ENCODE measurements at regions of chr16 and their contacts with region 1.

Region 1: GRCh38 chr16:23835390-23836077 is at the start of gene PRKCB:
- DNase-seq: peak; percentile 86
- H3K4me3 ChIP-seq: peak within 1 kb of the TSS; percentile 61 to 94 (median 91)
- H3K4me3 Mint-ChIP-seq: peak within 1 kb of the TSS; percentile 99
- H3K27ac ChIP-seq: peak within 1 kb of the TSS; percentile 38 to 76
- H3K27ac Mint-ChIP-seq: peak within 1 kb of the TSS; percentile 84 to 95 (median 91)
- H3K4me1 ChIP-seq: peaks cover 38 to 49% of the 10 kb centered on the region in 2 donors
- H3K4me1 Mint-ChIP-seq: peaks cover 50% of the 10 kb centered on the region
- H3K27me3 ChIP-seq: no peaks in the 10 kb centered on the region
- H3K27me3 Mint-ChIP-seq: peaks cover 5 to 6% (median 6%) of the 10 kb centered on the region in 3 donors
- CTCF ChIP-seq: no peak
- polyA plus RNA-seq, gene PRKCB: 57.4 to 87.4 (median 75.5) TPM

Region 2: DNA sequence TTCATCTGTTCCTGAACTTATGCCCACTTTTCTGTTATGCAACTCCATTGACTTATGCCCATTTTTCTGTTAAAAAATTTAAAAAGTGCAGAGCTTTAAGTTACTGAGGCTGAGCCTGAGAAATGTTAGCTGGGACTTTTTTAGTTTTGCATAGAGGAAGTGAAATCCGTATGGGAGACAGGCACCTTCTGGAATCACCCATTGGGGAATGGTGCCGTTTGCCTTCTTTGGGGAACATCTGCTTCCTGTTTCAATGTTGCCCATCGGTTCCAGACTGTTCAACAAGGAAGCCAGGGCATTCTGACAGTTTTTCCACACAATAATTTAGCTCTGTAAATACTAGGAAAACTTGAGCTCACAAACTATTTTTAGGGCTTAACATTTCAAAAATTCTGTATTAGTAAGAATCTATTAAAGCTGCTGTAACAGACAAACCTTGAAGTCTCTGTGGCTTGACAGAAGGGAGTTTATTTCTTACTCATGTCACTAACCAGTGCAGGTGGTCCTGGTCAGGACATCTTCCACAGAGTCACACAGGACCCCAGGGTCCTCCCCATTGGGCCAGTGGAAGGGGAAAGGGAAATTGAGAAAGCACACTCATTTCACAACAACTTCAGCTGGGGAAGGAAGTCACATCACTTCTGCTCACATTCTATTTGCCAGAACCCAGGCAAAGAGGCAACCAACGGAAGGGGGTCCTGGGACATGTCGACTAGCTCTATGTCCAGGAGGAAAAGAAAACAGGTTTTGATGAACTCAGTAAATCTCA is 17.4 kb after region 1 on chr16:
- intact Hi-C with region 1: loop called in 1 of 2 experiments (anchors 2 kb)
- DNase-seq: peak; percentile 26 to 86 (median 34)
- H3K4me3 ChIP-seq: peak overlapping the region in 2 of 3 experiments; percentile 10 to 46
- H3K4me3 Mint-ChIP-seq: peak overlapping the region; percentile 51 to 65
- H3K27ac ChIP-seq: peak overlapping the region; percentile 66 to 87
- H3K27ac Mint-ChIP-seq: peak overlapping the region; percentile 84 to 95 (median 93)
- H3K4me1 ChIP-seq: peaks cover 83 to 89% of the 10 kb centered on the region in 2 donors
- H3K4me1 Mint-ChIP-seq: peaks cover 96% of the 10 kb centered on the region
- H3K27me3 ChIP-seq: no peaks in the 10 kb centered on the region
- H3K27me3 Mint-ChIP-seq: no peaks in the 10 kb centered on the region
- CTCF ChIP-seq: no peak

Region 3: GRCh38 chr16:23874613-23875294 is 39.2 kb after region 1 on chr16:
- intact Hi-C with region 1: loop called in 1 of 2 experiments (anchors 5 kb)
- DNase-seq: peak; percentile 46 to 66 (median 66)
- H3K4me3 ChIP-seq: no peak overlapping the region
- H3K4me3 Mint-ChIP-seq: no peak overlapping the region
- H3K27ac ChIP-seq: peak overlapping the region; percentile 26 to 77
- H3K27ac Mint-ChIP-seq: peak overlapping the region; percentile 66 to 93 (median 78)
- H3K4me1 ChIP-seq: peaks cover 66 to 77% of the 10 kb centered on the region in 2 donors
- H3K4me1 Mint-ChIP-seq: peaks cover 82% of the 10 kb centered on the region
- H3K27me3 ChIP-seq: no peaks in the 10 kb centered on the region
- H3K27me3 Mint-ChIP-seq: no peaks in the 10 kb centered on the region
- CTCF ChIP-seq: no peak

Region 4: DNA sequence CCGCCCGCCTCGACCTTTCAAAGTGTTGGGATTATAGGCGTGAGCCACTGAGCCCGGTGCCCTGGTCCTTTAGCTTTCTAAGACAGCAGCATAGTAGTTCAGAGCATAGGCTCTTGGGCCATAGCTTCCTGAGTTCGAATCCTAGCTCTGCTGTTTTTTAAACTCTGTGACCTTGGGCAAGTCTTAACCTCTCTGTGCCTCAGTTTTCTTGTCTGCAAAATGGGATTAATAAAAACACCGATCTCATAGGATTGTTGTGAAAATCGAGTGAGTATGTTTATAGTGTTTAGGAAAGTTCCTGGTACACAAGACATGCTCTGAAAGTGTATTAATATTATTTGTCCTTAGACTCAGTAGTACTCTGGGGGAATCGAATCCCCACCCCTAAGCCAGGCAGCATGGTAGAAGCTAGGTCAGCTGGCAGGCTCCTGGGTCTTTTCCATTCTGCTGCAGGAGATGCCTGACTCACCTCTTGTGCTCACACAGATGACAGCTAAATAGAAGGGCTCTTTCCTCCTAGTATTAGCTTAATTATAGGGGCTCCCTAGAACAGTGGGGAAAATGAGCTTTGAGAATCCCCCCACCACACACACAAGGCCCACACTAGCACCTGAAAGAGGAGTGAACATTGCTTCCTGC is 44.3 kb after region 1 on chr16:
- intact Hi-C with region 1: loop called in 1 of 2 experiments (anchors 5 kb)
- DNase-seq: peak in 1 of 3 donors; percentile 21
- H3K4me3 ChIP-seq: no peak overlapping the region
- H3K4me3 Mint-ChIP-seq: no peak overlapping the region
- H3K27ac ChIP-seq: peak overlapping the region in 1 of 2 donors; percentile 76
- H3K27ac Mint-ChIP-seq: peak overlapping the region; percentile 37 to 91 (median 69)
- H3K4me1 ChIP-seq: peaks cover 61 to 79% of the 10 kb centered on the region in 2 donors
- H3K4me1 Mint-ChIP-seq: peaks cover 84% of the 10 kb centered on the region
- H3K27me3 ChIP-seq: no peaks in the 10 kb centered on the region
- H3K27me3 Mint-ChIP-seq: peaks cover 0 to 2% (median 0%) of the 10 kb centered on the region in 3 donors
- CTCF ChIP-seq: no peak

Measured in CD14-positive monocyte (primary cell).